ENCODE measurements at regions of chr21 and their contacts with region 1.

Region 1: DNA sequence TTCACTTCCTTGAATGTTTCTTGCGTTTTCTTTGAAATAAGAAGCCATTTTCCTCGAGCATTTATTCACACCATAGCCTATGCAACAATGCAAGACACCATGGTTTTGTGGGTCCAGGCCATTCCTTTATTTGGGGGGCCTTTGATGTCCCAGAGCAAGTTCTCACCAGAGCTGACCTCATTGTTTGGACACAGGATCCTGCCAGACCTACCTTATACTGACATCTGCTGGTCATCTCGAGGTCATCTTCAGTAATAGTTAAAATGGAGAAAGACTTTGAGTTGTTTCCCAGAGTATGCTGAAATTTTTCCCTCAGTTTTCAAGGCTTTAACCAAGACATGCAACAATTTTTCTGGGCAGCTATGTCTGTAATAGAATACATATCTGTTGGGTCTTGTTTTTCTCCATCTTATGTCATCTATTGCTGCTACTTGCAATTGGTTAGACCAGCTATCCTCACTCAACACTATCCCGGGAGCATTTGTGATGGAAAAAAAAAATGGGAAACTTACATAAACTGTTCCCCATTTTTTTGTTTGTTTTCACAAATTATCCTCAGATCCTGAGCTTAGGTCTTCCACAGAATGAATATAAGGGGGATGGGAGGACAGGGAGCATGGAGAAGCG is 34.0 kb upstream of the BACE2 start:
- DNase-seq: peak; percentile 44
- H3K27ac ChIP-seq: no peak overlapping the region
- CTCF ChIP-seq: peak; percentile 74

Region 2: GRCh38 chr21:41095983-41096382 is 38.0 kb before region 1 on chr21:
- CTCF ChIA-PET with region 1: no interaction called
- POLR2A ChIA-PET with region 1: no interaction called
- DNase-seq: no peak
- H3K27ac ChIP-seq: no peak overlapping the region
- CTCF ChIP-seq: no peak

Region 3: DNA sequence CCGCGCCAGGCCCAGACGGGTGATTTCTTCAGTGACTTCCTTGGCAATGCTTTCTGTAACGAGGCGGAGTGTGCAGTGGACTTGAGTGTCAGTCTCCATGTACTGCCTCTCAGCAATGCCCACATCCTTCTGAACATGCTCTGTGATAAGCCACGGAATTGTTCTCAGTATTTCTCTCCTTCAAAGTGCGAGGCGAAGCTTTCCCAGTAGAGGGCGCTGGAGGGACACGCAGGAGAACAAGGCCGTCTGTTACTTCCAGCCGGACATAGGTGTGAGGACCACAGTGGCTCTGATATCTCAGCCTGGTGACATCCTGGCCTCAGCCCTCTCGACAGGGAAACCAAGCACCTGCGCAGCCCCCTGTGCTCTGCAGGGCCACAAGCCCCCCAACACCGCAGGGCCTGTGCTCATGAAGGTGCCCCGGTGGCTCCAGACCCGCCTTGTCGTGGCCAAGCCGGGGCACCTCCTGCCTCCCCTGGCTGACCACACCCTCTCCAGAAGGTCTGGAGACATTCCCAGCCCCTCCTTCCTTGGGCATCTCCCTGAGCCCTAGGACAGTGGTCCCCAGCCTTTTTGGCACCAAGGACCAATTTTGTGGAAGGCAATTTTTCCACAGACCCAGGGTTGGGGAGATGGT is 12.1 kb before region 1 on chr21:
- CTCF ChIA-PET with region 1: interaction called, 35 read pairs
- POLR2A ChIA-PET with region 1: no interaction called
- DNase-seq: peak; percentile 45
- H3K27ac ChIP-seq: no peak overlapping the region
- CTCF ChIP-seq: peak; percentile 90